ENCODE measurements at regions of chrX and their contacts with region 1.

Region 1: DNA sequence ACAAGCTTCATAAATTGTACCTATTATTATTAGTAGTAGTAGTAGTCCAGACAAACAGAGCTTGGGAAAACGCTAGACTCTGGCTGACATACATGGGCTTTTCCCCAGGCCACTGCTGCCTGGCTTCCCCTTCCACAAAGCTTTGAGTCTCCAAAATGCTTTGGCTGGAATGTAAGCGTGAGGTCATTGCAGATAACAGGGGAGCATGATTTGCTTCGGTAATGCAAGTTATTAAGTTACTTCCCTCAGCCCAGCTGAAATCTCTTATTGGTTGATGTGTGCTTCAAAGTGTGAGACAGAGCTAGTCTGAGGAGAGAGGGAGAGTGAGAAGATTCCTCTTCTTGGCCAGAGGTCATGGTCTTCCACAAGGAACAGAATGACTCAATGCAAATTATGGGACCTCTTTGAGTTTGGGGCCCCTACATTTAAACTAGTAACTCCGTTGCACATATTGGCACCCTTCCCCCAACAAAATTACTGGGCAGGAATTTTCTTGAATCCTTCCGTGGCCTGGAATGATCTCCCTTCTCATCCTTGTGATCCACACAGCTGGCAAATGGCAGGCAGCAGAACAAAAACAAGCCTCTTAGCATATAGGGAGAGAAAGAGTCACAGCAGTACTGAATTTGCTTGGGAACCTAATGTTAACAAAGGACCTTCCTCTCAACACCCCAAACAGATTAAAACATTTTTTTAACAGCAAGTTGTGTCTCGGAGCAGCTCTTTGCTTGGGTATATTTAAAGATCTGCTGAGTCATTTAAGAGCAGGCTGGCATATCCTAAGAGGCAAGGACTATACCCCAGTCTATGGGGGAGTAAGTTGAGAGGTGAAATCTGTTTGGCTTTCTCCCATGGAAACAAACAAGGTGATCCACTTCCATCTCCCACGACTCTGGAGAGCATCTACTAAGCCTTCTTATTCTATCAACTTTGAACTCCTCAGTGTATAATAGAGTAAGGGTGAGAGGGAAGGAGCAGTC is 19.9 kb downstream of the AR start:
- DNase-seq: no peak
- ATAC-seq: peak; percentile 73 to 85 (median 81)
- H3K4me3 ChIP-seq: peak overlapping the region; percentile 20
- H3K27ac ChIP-seq: peak overlapping the region; percentile 79
- H3K4me1 ChIP-seq: no peaks in the 10 kb centered on the region
- H3K27me3 ChIP-seq: peaks cover 0 to 12% (median 0%) of the 10 kb centered on the region in 3 donors
- CTCF ChIP-seq: no peak

Region 2: GRCh38 chrX:67353651-67354370 is 209.9 kb before region 1 on chrX:
- intact Hi-C with region 1: no loop called
- DNase-seq: no peak
- ATAC-seq: no peak
- H3K4me3 ChIP-seq: no peak overlapping the region
- H3K27ac ChIP-seq: no peak overlapping the region
- H3K4me1 ChIP-seq: no peaks in the 10 kb centered on the region
- H3K27me3 ChIP-seq: peaks cover 0 to 6% (median 0%) of the 10 kb centered on the region in 3 donors
- CTCF ChIP-seq: no peak

Region 3: GRCh38 chrX:67436867-67437266 is 126.9 kb before region 1 on chrX:
- intact Hi-C with region 1: no loop called
- DNase-seq: no peak
- ATAC-seq: no peak
- H3K4me3 ChIP-seq: no peak overlapping the region
- H3K27ac ChIP-seq: no peak overlapping the region
- H3K4me1 ChIP-seq: no peaks in the 10 kb centered on the region
- H3K27me3 ChIP-seq: peaks cover 0 to 10% (median 0%) of the 10 kb centered on the region in 3 donors
- CTCF ChIP-seq: no peak

Region 4: DNA sequence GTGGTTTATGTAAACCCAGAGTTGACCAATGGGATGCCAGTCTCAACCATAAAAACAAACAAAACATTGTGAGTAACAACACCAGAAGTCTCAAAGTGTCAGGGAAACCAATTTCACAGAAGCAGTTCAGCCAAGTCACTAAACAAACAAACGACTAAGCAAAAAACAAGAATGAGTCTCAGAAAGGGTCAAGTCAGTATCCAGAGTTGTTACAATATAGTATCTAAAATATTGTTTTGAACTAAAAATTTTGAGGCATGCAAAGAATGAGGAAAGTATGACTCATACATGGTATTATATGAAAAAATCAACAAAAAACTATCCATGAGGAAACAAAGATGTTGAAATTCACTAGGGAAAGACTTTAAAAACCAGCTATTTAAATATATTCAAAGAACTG is 50.7 kb after region 1 on chrX:
- intact Hi-C with region 1: no loop called
- DNase-seq: no peak
- ATAC-seq: no peak
- H3K4me3 ChIP-seq: no peak overlapping the region
- H3K27ac ChIP-seq: no peak overlapping the region
- H3K4me1 ChIP-seq: no peaks in the 10 kb centered on the region
- H3K27me3 ChIP-seq: no peaks in the 10 kb centered on the region
- CTCF ChIP-seq: no peak

Region 5: GRCh38 chrX:67718926-67719325 is 155.2 kb after region 1 on chrX:
- intact Hi-C with region 1: loop called in 1 of 2 experiments (anchors 5 kb)
- DNase-seq: peak in 1 of 2 donors; percentile 72
- ATAC-seq: peak; percentile 88 to 94 (median 92)
- H3K4me3 ChIP-seq: no peak overlapping the region
- H3K27ac ChIP-seq: no peak overlapping the region
- H3K4me1 ChIP-seq: peaks cover 3% of the 10 kb centered on the region
- H3K27me3 ChIP-seq: no peaks in the 10 kb centered on the region
- CTCF ChIP-seq: no peak

Region 6: DNA sequence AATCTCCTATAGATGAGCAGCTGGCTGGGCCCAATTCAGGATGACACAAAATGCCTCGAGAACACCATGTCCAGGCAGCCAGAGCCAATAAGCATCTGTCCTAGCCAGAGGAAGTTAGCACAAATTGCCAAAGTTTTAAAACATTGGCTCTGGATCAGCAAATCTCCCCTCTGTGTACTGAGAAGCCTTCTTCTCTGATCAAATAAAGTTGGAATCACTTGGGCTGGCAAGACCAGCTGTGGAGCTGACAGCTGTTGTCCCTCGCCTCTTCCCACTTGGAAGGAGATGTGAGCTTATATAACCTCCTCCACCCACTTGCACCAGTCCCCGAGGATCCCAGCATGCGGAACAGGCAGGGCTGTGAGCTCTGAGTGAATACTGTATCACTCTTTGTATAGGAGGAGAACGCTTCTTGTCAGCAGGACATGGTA is 685.7 kb after region 1 on chrX:
- intact Hi-C with region 1: no loop called
- DNase-seq: peak; percentile 33 to 60
- ATAC-seq: peak in 3 of 4 donors; percentile 49 to 63 (median 57)
- H3K4me3 ChIP-seq: no peak overlapping the region
- H3K27ac ChIP-seq: no peak overlapping the region
- H3K4me1 ChIP-seq: no peaks in the 10 kb centered on the region
- H3K27me3 ChIP-seq: peaks cover 0 to 13% (median 0%) of the 10 kb centered on the region in 3 donors
- CTCF ChIP-seq: no peak

Measured in psoas muscle (tissue), 8 donors.